Activated CD4-positive, alpha-beta T cell treated with anti-CD3 and anti-CD28 coated beads, Interleukin-2, amount 10 ng/mL, durations not matched to agents 24 days and 14 days (primary cell): ENCODE measurements at regions of chr5 and their contacts with region 1.

Region 1: DNA sequence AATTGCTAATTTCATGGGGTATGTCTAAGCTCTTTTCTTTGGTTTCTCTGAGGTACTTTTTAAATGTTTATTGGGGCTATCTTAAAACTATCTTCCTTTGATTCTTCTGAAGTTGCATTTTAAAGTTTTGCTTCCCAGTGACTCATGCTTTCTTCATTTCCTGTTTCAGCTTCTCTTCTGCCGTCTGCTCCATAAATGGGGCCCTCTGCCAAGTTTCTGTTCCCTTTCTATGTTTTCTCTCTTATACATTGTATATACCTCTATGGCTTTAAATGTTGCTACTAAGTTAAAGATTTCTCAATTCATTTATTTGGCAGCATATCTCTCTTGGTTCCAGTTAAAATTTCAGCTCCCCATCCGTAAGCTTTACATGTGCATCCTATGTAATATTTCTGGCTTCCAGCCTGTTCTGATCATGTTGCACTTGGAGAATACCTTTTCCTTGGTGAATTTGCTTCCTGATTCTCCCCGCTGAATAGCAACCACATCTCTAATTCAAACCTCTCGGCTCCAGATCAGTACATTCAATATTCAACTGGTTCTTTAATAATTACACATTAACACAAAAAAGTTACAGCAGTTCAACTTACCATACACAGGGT is 125.3 kb downstream of the ST8SIA4 start:
- DNase-seq: peak; percentile 63
- H3K4me3 Mint-ChIP-seq: peak overlapping the region; percentile 19
- H3K27ac Mint-ChIP-seq: peak overlapping the region; percentile 49
- H3K4me1 Mint-ChIP-seq: peaks cover 46% of the 10 kb centered on the region
- H3K27me3 Mint-ChIP-seq: no peaks in the 10 kb centered on the region

Region 2: GRCh38 chr5:100535060-100536005 is 242.4 kb before region 1 on chr5 and contains the start of gene FAM174A:
- intact Hi-C with region 1: loop called (anchors 10 kb)
- DNase-seq: peak; percentile 98
- H3K4me3 Mint-ChIP-seq: peak within 1 kb of the TSS; percentile 98
- H3K27ac Mint-ChIP-seq: peak within 1 kb of the TSS; percentile 88
- H3K4me1 Mint-ChIP-seq: peaks cover 19% of the 10 kb centered on the region
- H3K27me3 Mint-ChIP-seq: peaks cover 10% of the 10 kb centered on the region
- total RNA-seq, gene FAM174A: 8.1 and 10.0 TPM in 2 replicates

Region 3: DNA sequence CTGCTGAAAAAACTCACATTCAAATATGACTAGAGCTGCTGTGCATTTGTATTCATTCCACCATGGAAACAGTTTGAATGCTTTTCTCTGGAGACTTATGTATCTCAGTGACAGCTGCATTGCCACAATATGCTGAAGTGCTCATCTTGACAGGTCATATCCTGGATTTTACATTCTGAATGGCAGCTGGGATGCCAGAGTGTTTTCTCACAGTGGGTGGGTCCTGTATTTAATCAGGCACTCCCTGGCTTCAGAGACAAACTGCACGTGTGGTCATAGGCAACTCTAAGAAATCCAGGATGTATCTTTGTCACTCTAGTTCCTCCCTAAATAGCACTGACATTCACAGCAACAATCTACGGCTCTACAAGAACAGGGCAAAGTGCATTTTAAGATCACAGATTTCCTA is 49.7 kb after region 1 on chr5:
- intact Hi-C with region 1: loop called (anchors 1 kb)
- DNase-seq: no peak
- H3K4me3 Mint-ChIP-seq: no peak overlapping the region
- H3K27ac Mint-ChIP-seq: peak overlapping the region; percentile 45
- H3K4me1 Mint-ChIP-seq: peaks cover 30% of the 10 kb centered on the region
- H3K27me3 Mint-ChIP-seq: no peaks in the 10 kb centered on the region

Region 4: DNA sequence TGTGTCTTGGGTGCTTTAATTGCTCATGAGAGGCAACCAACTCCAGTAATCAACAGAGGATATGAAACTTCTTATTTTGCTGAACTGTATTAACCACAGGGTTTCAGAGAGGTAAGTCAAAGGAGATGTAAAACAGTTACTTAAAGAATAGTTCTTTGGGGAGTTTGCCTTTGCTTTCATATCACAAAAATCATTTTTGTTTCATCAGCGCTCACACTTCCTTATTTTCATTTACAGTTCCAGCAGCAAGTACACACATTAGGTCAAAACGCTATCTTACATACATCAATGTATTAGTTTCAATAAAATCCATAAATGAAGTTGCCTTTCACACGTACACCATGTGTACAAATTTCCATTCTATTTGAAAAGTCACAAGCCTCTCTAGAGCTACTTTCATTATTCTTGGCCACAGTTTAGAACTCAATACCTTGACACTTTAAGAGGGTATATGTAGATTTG is 75.2 kb after region 1 on chr5:
- intact Hi-C with region 1: loop called (anchors 1 kb)
- DNase-seq: no peak
- H3K4me3 Mint-ChIP-seq: peak overlapping the region; percentile 73
- H3K27ac Mint-ChIP-seq: peak overlapping the region; percentile 89
- H3K4me1 Mint-ChIP-seq: peaks cover 31% of the 10 kb centered on the region
- H3K27me3 Mint-ChIP-seq: no peaks in the 10 kb centered on the region

Region 5: GRCh38 chr5:100860407-100860806 is 82.6 kb after region 1 on chr5:
- intact Hi-C with region 1: loop called (anchors 1 kb)
- DNase-seq: no peak
- H3K4me3 Mint-ChIP-seq: peak overlapping the region; percentile 27
- H3K27ac Mint-ChIP-seq: peak overlapping the region; percentile 88
- H3K4me1 Mint-ChIP-seq: peaks cover 44% of the 10 kb centered on the region
- H3K27me3 Mint-ChIP-seq: no peaks in the 10 kb centered on the region